ENCODE measurements at regions of chr2 and their contacts with region 1.

Region 1: GRCh38 chr2:33488715-33489540 is 12.5 kb downstream of the RASGRP3 start:
- DNase-seq: no peak
- ATAC-seq: peak; percentile 19
- H3K4me3 Mint-ChIP-seq: peak overlapping the region; percentile 51
- H3K27ac Mint-ChIP-seq: peak overlapping the region; percentile 87
- H3K4me1 Mint-ChIP-seq: peaks cover 96% of the 10 kb centered on the region
- H3K27me3 Mint-ChIP-seq: no peaks in the 10 kb centered on the region
- CTCF ChIP-seq: no peak

Region 2: DNA sequence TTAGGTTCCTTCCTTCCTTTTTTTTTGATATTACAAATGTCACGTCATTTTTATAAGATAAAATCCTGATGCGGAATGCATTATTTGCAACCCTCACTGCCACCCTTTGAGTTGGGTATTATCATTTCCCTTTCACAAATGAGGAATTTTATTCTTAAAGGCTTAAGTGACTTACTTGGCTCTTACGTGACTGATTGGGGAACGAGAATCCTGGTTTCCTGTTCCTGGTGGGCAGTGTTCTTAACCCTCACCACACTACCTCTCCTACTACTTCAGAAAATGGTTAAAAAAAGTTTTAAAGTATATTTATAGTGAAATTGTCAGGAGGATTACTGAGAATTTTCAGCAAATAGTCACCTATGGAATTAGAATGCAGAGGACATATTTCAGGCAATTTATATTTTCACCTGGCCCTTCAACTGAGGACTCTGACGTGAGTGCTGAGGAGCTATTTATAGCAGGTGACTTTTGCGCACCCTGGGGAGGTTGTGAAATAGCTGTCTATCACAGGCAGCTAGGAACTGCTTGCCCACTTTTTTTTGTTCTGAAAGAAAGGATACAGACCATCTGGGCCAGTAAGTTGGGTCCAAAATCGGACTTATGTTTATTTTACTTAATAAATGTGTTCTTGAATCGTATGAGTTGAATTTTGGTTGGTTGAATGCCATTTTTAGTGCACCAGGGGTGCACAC is 31.2 kb before region 1 on chr2:
- CTCF ChIA-PET with region 1: no interaction called
- POLR2A ChIA-PET with region 1: no interaction called
- intact Hi-C with region 1: no loop called
- DNase-seq: no peak
- ATAC-seq: peak; percentile 65
- H3K4me3 Mint-ChIP-seq: peak overlapping the region; percentile 4
- H3K27ac Mint-ChIP-seq: no peak overlapping the region
- H3K4me1 Mint-ChIP-seq: peaks cover 6% of the 10 kb centered on the region
- H3K27me3 Mint-ChIP-seq: no peaks in the 10 kb centered on the region
- CTCF ChIP-seq: no peak

Region 3: GRCh38 chr2:33505966-33506365 is 17.0 kb after region 1 on chr2:
- CTCF ChIA-PET with region 1: interaction called, 3 read pairs
- POLR2A ChIA-PET with region 1: interaction called, 421 read pairs
- intact Hi-C with region 1: no loop called
- DNase-seq: no peak
- ATAC-seq: no peak
- H3K4me3 Mint-ChIP-seq: no peak overlapping the region
- H3K27ac Mint-ChIP-seq: no peak overlapping the region
- H3K4me1 Mint-ChIP-seq: peaks cover 84% of the 10 kb centered on the region
- H3K27me3 Mint-ChIP-seq: no peaks in the 10 kb centered on the region
- CTCF ChIP-seq: no peak

Region 4: GRCh38 chr2:34365932-34366331 is 877.0 kb after region 1 on chr2:
- CTCF ChIA-PET with region 1: no interaction called
- POLR2A ChIA-PET with region 1: no interaction called
- intact Hi-C with region 1: no loop called
- DNase-seq: no peak
- ATAC-seq: no peak
- H3K4me3 Mint-ChIP-seq: no peak overlapping the region
- H3K27ac Mint-ChIP-seq: no peak overlapping the region
- H3K4me1 Mint-ChIP-seq: no peaks in the 10 kb centered on the region
- H3K27me3 Mint-ChIP-seq: no peaks in the 10 kb centered on the region
- CTCF ChIP-seq: no peak